Colonic mucosa (tissue), 4 donors: ENCODE measurements at regions of chr9 and their contacts with region 1.

Region 1: DNA sequence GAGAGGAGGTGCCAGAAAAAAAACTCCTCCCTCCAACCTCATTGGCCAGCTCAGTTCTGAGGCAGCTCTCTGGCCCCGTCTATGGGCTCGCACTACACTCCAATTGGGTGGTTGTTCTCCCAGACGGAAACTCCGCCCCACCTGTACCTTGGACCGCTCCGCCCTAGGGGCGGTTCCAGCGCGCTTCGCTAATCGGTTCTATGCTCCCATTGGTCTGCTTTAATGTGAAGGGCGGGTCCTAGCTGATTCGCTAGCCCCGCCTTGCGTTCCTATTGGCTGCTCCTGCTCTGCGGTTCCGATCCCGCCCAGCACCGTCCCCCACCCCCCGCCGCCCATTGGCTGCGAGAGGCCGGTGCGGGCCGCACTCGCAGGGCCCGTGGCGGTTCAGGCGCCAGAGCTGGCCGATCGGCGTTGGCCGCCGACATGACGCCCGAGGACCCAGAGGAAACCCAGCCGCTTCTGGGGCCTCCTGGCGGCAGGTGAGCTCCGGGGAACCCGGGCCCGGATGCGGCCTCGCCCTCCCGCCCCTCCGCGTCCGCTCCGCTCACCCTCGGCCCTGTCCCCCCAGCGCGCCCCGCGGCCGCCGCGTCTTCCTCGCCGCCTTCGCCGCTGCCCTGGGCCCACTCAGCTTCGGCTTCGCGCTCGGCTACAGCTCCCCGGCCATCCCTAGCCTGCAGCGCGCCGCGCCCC is at the start of gene SLC2A8:
- DNase-seq: peak; percentile 99
- H3K4me3 ChIP-seq: peak within 1 kb of the TSS; percentile 66
- H3K27ac ChIP-seq: peak within 1 kb of the TSS; percentile 79
- H3K4me1 ChIP-seq: peaks cover 4% of the 10 kb centered on the region
- H3K27me3 ChIP-seq: no peaks in the 10 kb centered on the region
- CTCF ChIP-seq: peak; percentile 11
- total RNA-seq, gene SLC2A8: 20.4 to 33.6 TPM

Region 2: GRCh38 chr9:127214421-127215267 is 182.3 kb before region 1 on chr9:
- intact Hi-C with region 1: loop called (anchors 10 kb)
- DNase-seq: peak; percentile 65
- H3K4me3 ChIP-seq: no peak overlapping the region
- H3K27ac ChIP-seq: no peak overlapping the region
- H3K4me1 ChIP-seq: no peaks in the 10 kb centered on the region
- H3K27me3 ChIP-seq: no peaks in the 10 kb centered on the region
- CTCF ChIP-seq: peak; percentile 83

Region 3: DNA sequence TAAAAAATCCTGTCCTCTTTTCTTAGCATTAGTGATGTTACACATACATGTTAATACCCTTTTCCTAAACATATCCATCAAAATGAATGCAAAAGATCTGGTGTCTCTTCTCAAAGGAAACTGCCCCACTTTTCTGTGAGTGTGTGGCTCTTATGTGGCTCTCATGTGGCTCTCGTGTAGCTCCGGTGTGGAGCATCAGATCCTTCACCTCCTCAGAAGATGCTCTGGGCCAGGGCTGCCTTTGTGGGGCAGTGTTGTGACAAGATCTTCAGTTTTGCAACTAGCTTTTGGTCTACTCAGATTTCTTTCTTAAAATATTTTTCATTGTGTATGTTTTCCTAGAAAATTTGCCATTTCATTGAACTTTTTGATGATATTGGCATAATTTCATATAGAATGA is 113.0 kb before region 1 on chr9:
- intact Hi-C with region 1: loop called (anchors 10 kb)
- DNase-seq: peak; percentile 21
- H3K4me3 ChIP-seq: no peak overlapping the region
- H3K27ac ChIP-seq: no peak overlapping the region
- H3K4me1 ChIP-seq: no peaks in the 10 kb centered on the region
- H3K27me3 ChIP-seq: no peaks in the 10 kb centered on the region
- CTCF ChIP-seq: no peak

Region 4: DNA sequence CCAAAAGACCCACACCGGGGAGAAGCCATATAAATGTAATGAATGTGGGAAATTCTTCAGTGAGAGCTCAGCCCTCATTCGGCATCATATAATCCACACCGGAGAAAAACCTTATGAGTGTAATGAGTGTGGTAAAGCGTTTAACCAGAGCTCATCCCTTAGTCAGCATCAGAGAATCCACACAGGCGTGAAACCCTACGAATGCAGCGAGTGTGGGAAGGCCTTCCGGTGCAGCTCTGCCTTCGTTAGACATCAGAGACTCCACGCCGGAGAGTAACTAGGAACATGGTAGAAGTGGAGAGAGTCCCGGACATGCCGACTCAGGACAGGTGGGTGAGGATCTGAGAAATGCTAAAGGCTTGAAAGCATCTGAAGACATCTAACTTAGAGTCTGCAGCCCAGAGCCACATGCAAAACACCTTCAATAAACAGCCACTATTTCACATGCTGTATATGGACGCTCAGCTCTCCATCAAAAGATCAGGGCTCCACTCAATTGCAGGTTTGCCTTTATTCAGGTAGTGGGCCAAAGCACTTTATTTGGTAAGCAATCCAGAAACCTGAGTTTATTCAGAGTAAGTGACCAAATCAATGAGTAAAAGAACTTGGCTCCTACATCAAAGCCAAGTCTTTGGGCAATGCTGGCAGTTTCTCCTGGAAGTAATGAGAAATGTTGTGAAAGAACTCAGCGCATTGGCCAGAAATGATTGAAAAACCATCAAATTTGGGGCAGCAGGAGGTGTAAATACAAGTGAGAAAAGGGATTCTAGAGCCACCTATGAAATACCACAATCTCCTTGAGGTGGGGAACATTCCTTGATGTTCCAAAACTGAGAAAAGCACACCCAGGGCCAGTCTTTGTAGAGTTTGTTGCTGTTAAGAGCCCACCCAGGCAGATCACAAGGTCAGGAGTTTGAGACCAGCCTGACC is 48.2 kb after region 1 on chr9:
- intact Hi-C with region 1: loop called (anchors 5 kb)
- DNase-seq: no peak
- H3K4me3 ChIP-seq: no peak overlapping the region
- H3K27ac ChIP-seq: no peak overlapping the region
- H3K4me1 ChIP-seq: peaks cover 9% of the 10 kb centered on the region
- H3K27me3 ChIP-seq: no peaks in the 10 kb centered on the region
- CTCF ChIP-seq: no peak

Region 5: DNA sequence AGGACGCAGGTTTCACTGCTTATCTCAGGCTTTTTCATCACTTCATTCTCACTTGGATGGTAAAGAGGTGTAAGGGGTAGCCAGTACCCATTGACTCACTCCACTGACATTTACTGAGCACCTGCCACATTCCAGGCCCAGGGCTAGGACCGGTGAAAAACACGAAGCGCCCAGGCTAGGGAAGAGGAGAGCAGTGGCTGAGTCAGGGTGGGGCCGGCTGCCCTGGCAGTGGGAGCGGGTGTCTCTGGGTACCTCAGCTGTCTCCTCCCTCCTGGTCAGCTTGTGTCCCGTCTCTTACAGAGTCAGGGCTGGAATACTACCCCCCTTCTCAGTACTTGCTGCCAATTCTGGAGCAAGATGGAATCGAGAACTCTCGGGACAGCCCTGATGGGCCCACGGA is 76.5 kb after region 1 on chr9:
- intact Hi-C with region 1: no loop called
- DNase-seq: no peak
- H3K4me3 ChIP-seq: no peak overlapping the region
- H3K27ac ChIP-seq: no peak overlapping the region
- H3K4me1 ChIP-seq: no peaks in the 10 kb centered on the region
- H3K27me3 ChIP-seq: no peaks in the 10 kb centered on the region
- CTCF ChIP-seq: no peak